MCF 10A (cell line): ENCODE measurements at regions of chr7 and their contacts with region 1.

Region 1: GRCh38 chr7:72326206-72326922 is 85.8 kb downstream of the CALN1 start:
- DNase-seq: no peak
- H3K4me3 Mint-ChIP-seq: no peak overlapping the region
- H3K27ac Mint-ChIP-seq: no peak overlapping the region
- H3K4me1 Mint-ChIP-seq: peaks cover 1% of the 10 kb centered on the region
- H3K27me3 Mint-ChIP-seq: peaks cover 21% of the 10 kb centered on the region
- CTCF ChIP-seq: no peak

Region 2: GRCh38 chr7:72183684-72184234 is 142.6 kb before region 1 on chr7:
- CTCF ChIA-PET with region 1: interaction called, 3 read pairs
- POLR2A ChIA-PET with region 1: no interaction called
- intact Hi-C with region 1: loop called (anchors 10 kb)
- DNase-seq: no peak
- H3K4me3 Mint-ChIP-seq: no peak overlapping the region
- H3K27ac Mint-ChIP-seq: no peak overlapping the region
- H3K4me1 Mint-ChIP-seq: peaks cover 6% of the 10 kb centered on the region
- H3K27me3 Mint-ChIP-seq: no peaks in the 10 kb centered on the region
- CTCF ChIP-seq: peak; percentile 49